CD4-positive, alpha-beta T cell (primary cell): ENCODE measurements at regions of chr15 and their contacts with region 1.

Region 1: GRCh38 chr15:66946578-66947164 is 118.7 kb upstream of the SMAD3 start:
- DNase-seq: peak; percentile 49 to 88 (median 70)
- ATAC-seq: peak; percentile 83
- H3K4me3 ChIP-seq: no peak overlapping the region
- H3K4me3 Mint-ChIP-seq: no peak overlapping the region
- H3K27ac ChIP-seq: no peak overlapping the region
- H3K27ac Mint-ChIP-seq: no peak overlapping the region
- H3K4me1 ChIP-seq: no peaks in the 10 kb centered on the region
- H3K4me1 Mint-ChIP-seq: no peaks in the 10 kb centered on the region
- H3K27me3 ChIP-seq: no peaks in the 10 kb centered on the region
- H3K27me3 Mint-ChIP-seq: no peaks in the 10 kb centered on the region
- CTCF ChIP-seq: peak; percentile 87

Region 2: DNA sequence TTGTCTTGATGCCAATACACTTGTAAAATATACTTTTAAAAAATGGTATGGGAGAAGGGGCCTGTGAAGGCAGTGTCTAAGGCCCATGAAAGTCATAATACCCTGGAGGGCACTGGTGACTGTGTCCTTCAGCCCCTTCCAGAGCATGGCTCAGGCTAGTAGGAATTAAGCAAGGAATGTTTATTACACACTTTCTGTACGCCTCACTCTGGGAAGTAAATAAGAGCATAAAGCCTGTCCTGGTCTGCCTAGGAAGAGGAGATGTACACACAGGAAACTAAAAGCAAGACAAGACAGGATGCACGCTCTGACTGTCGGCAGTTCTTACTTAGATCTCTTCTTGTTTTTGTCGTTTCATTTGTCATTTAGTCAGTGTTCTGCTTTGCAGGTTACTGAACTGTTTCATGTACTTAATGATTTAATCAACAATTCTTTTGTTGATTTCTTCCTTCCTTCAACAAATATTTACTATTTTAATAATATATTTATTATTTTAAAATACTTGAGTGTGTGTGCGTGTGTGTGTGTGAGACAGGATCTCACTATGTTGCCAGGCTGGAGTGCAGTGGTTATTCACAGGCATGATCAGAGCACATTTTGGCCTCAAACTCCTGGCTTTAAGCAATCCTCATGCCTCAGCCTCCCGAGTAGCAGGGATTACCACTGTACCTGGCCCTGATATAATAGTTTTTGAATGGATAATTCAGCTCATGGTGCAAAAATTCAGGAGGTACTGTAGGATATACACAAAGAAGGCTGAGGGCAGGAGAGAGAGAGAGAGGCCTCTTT is 253.7 kb before region 1 on chr15:
- CTCF ChIA-PET with region 1: no interaction called
- POLR2A ChIA-PET with region 1: no interaction called
- intact Hi-C with region 1: no loop called
- DNase-seq: peak in 5 of 14 experiments; percentile 13 to 56 (median 41)
- ATAC-seq: peak; percentile 90
- H3K4me3 ChIP-seq: no peak overlapping the region
- H3K4me3 Mint-ChIP-seq: peak overlapping the region; percentile 58
- H3K27ac ChIP-seq: peak overlapping the region; percentile 10 to 54
- H3K27ac Mint-ChIP-seq: peak overlapping the region; percentile 92
- H3K4me1 ChIP-seq: peaks cover 13% of the 10 kb centered on the region
- H3K4me1 Mint-ChIP-seq: peaks cover 35% of the 10 kb centered on the region
- H3K27me3 ChIP-seq: no peaks in the 10 kb centered on the region
- H3K27me3 Mint-ChIP-seq: no peaks in the 10 kb centered on the region
- CTCF ChIP-seq: no peak

Region 3: DNA sequence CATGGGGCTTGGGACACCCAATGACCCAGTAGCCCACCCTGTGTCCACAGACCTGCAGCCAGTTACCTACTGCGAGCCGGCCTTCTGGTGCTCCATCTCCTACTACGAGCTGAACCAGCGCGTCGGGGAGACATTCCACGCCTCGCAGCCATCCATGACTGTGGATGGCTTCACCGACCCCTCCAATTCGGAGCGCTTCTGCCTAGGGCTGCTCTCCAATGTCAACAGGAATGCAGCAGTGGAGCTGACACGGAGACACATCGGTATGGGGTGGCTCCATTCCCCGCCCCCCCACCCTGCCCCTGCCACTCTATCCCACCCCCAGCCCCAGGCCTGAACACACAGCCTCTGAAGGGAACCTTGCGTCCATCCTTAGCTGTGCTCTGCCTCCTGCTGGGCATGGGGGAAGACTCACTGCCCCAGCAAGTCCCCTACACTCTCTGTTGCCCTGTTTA is 234.5 kb after region 1 on chr15:
- CTCF ChIA-PET with region 1: interaction called, 6 read pairs
- POLR2A ChIA-PET with region 1: no interaction called
- intact Hi-C with region 1: loop called (anchors 2 to 5 kb)
- DNase-seq: peak in 6 of 14 experiments; percentile 12 to 46 (median 26)
- ATAC-seq: no peak
- H3K4me3 ChIP-seq: no peak overlapping the region
- H3K4me3 Mint-ChIP-seq: no peak overlapping the region
- H3K27ac ChIP-seq: no peak overlapping the region
- H3K27ac Mint-ChIP-seq: no peak overlapping the region
- H3K4me1 ChIP-seq: peaks cover 15% of the 10 kb centered on the region
- H3K4me1 Mint-ChIP-seq: peaks cover 7% of the 10 kb centered on the region
- H3K27me3 ChIP-seq: no peaks in the 10 kb centered on the region
- H3K27me3 Mint-ChIP-seq: no peaks in the 10 kb centered on the region
- CTCF ChIP-seq: no peak

Region 4: GRCh38 chr15:67240235-67241131 is 293.8 kb after region 1 on chr15:
- CTCF ChIA-PET with region 1: interaction called, 6 read pairs
- POLR2A ChIA-PET with region 1: interaction called, 3 read pairs
- intact Hi-C with region 1: loop called (anchors 5 kb)
- DNase-seq: peak in 10 of 14 experiments; percentile 7 to 68 (median 26)
- ATAC-seq: peak; percentile 84
- H3K4me3 ChIP-seq: no peak overlapping the region
- H3K4me3 Mint-ChIP-seq: peak overlapping the region; percentile 16
- H3K27ac ChIP-seq: peak overlapping the region in 1 of 2 donors; percentile 63
- H3K27ac Mint-ChIP-seq: peak overlapping the region; percentile 66
- H3K4me1 ChIP-seq: peaks cover 28% of the 10 kb centered on the region
- H3K4me1 Mint-ChIP-seq: peaks cover 61% of the 10 kb centered on the region
- H3K27me3 ChIP-seq: no peaks in the 10 kb centered on the region
- H3K27me3 Mint-ChIP-seq: no peaks in the 10 kb centered on the region
- CTCF ChIP-seq: peak; percentile 52

Region 5: DNA sequence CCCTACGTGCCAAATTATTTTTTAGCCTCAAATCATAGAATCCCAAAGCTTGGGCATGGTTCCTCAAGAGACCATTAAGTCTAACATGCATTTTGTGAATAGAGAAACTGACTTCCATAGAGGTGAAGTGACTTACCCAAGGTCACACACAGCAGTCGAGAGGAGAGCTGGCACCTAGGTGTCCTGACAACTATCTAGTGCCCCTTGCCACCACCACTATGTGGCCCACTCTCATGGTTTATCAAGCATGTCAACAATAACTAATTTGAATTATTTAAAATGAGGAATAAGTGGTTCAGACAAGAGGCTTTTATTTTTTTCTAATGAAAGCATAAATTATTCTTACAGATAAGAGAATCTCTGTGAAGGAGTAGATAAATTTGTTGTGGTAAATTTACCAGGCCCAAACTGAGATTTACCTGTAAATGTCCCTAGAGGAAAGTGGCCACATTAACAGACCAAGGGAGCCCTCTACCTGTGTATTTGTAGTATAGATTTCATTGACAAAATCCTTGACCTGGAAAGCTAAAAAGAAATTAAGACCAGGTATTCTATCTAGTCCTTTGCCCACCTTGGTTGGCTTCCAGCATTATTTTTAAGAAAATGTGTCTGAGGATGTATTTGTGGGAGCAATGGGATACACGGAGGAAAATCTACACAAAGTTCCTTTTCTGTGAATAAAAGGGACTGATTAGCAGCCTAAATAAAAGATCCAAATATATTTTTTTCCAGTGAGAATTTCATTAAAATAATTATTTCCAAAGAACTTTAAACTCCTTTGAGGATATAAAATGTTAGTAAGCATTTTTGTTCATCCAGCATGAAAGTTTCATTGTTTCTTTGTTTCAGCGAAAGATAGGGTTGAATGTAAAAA is 357.1 kb after region 1 on chr15:
- CTCF ChIA-PET with region 1: interaction called, 46 read pairs
- POLR2A ChIA-PET with region 1: interaction called, 5 read pairs
- intact Hi-C with region 1: loop called (anchors 1 kb)
- DNase-seq: peak in 10 of 14 experiments; percentile 0 to 74 (median 12)
- ATAC-seq: peak; percentile 59
- H3K4me3 ChIP-seq: no peak overlapping the region
- H3K4me3 Mint-ChIP-seq: no peak overlapping the region
- H3K27ac ChIP-seq: no peak overlapping the region
- H3K27ac Mint-ChIP-seq: no peak overlapping the region
- H3K4me1 ChIP-seq: no peaks in the 10 kb centered on the region
- H3K4me1 Mint-ChIP-seq: no peaks in the 10 kb centered on the region
- H3K27me3 ChIP-seq: no peaks in the 10 kb centered on the region
- H3K27me3 Mint-ChIP-seq: no peaks in the 10 kb centered on the region
- CTCF ChIP-seq: peak; percentile 79

Region 6: GRCh38 chr15:67433495-67434099 is 486.9 kb after region 1 on chr15:
- CTCF ChIA-PET with region 1: interaction called, 8 read pairs
- POLR2A ChIA-PET with region 1: no interaction called
- intact Hi-C with region 1: loop called (anchors 1 kb)
- DNase-seq: peak in 5 of 14 experiments; percentile 8 to 42 (median 23)
- ATAC-seq: no peak
- H3K4me3 ChIP-seq: no peak overlapping the region
- H3K4me3 Mint-ChIP-seq: no peak overlapping the region
- H3K27ac ChIP-seq: no peak overlapping the region
- H3K27ac Mint-ChIP-seq: no peak overlapping the region
- H3K4me1 ChIP-seq: no peaks in the 10 kb centered on the region
- H3K4me1 Mint-ChIP-seq: no peaks in the 10 kb centered on the region
- H3K27me3 ChIP-seq: no peaks in the 10 kb centered on the region
- H3K27me3 Mint-ChIP-seq: no peaks in the 10 kb centered on the region
- CTCF ChIP-seq: peak; percentile 63